ENCODE measurements at regions of chr21 and their contacts with region 1.

Region 1: GRCh38 chr21:44626262-44626661 is 631 bp upstream of the KRTAP10-9 start:
- DNase-seq: peak in 1 of 5 donors; percentile 58
- ATAC-seq: peak in 2 of 4 donors; percentile 20 to 26
- H3K4me3 ChIP-seq: no peak overlapping the region
- H3K27ac ChIP-seq: peak overlapping the region in 1 of 12 donors; percentile 52
- H3K4me1 ChIP-seq: peaks cover 0 to 29% (median 0%) of the 10 kb centered on the region in 12 donors
- H3K27me3 ChIP-seq: peaks cover 0 to 26% (median 0%) of the 10 kb centered on the region in 9 donors
- CTCF ChIP-seq: no peak
- POLR2A ChIP-seq: no peak

Region 2: DNA sequence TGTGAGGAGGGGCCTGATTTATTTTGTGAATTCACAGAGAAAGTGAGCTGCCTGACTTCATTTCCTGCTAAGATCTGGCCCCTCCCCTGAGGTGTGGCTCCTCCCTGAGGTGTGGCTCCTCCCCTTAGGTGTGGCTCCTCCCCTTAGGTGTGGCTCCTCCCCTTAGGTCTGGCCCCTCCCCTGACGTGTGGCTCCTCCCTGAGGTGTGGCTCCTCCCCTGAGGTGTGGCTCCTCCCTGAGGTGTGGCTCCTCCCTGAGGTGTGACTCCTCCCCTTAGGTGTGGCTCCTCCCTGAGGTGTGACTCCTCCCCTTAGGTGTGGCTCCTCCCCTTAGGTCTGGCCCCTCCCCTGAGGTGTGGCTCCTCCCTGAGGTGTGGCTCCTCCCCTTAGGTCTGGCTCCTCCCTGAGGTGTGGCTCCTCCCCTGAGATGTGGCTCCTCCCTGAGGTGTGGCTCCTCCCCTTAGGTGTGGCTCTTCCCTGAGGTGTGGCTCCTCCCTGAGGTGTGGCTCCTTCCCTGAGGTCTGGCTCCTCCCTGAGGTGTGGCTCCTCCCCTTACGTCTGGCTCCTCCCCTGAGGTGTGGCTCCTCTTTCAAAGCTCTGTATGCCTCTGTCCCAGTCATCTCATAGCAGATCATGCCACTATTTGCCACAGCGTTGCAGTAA is 197.8 kb before region 1 on chr21:
- intact Hi-C with region 1: no loop called
- DNase-seq: peak in 1 of 5 donors; percentile 20
- ATAC-seq: no peak
- H3K4me3 ChIP-seq: no peak overlapping the region
- H3K27ac ChIP-seq: no peak overlapping the region
- H3K4me1 ChIP-seq: no peaks in the 10 kb centered on the region
- H3K27me3 ChIP-seq: peaks cover 0 to 11% (median 0%) of the 10 kb centered on the region in 9 donors
- CTCF ChIP-seq: no peak
- POLR2A ChIP-seq: no peak

Region 3: DNA sequence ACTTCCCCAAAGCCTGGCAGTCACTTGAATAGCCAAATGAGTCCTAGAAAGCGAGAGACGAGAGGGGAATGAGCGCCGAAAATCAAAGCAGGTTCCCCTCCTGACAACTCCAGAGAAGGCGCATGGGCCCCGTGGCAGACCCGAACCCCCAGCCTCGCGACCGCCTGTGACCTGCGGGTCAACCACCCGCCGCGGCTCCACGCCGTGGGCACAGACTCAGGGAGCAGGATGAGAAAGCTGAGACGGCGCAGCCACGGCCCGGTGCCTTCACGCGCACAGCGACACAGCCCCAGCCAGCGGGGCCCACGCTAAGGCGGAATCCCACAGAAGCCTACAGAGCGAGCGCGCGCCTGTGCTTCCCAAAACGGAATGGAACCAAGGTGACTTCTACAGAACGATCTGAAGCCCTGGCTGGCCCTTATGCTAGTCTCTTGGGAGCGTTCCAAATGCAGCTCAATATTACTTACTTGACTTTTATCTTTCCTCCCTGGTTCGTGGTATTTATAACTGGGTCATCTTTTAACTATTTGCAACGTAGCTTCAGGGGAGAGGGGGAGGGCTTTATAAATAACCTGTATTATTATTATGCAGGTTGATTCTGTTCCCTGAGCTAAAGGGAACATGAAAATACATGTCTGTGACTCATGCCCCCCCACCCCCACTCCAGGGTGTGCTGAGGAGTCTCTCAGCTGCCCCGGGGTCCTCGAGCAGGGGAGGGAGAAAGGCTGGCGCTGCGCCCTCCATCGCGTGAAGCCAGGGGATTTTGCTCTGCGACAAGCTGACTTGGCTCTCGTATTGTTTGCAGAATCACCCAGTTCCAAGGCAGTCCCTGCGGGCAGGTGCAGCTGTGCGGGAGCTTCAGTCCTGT is 83.4 kb after region 1 on chr21:
- intact Hi-C with region 1: loop called in 1 of 10 experiments (anchors 10 kb)
- DNase-seq: peak in 1 of 5 donors; percentile 61
- ATAC-seq: peak; percentile 39 to 73 (median 64)
- H3K4me3 ChIP-seq: peak overlapping the region in 8 of 12 donors; percentile 5 to 35 (median 14)
- H3K27ac ChIP-seq: peak overlapping the region in 4 of 12 donors; percentile 46 to 72 (median 54)
- H3K4me1 ChIP-seq: peaks cover 0 to 46% (median 15%) of the 10 kb centered on the region in 12 donors
- H3K27me3 ChIP-seq: peaks cover 29 to 90% (median 76%) of the 10 kb centered on the region in 9 donors
- CTCF ChIP-seq: no peak
- POLR2A ChIP-seq: no peak

Region 4: GRCh38 chr21:44742418-44743153 is 116.3 kb after region 1 on chr21:
- intact Hi-C with region 1: loop called in 1 of 10 experiments (anchors 5 kb)
- DNase-seq: no peak
- ATAC-seq: no peak
- H3K4me3 ChIP-seq: no peak overlapping the region
- H3K27ac ChIP-seq: no peak overlapping the region
- H3K4me1 ChIP-seq: no peaks in the 10 kb centered on the region
- H3K27me3 ChIP-seq: peaks cover 0 to 3% (median 0%) of the 10 kb centered on the region in 9 donors
- CTCF ChIP-seq: peak in 9 of 12 donors; percentile 8 to 42 (median 32)
- POLR2A ChIP-seq: no peak

Region 5: DNA sequence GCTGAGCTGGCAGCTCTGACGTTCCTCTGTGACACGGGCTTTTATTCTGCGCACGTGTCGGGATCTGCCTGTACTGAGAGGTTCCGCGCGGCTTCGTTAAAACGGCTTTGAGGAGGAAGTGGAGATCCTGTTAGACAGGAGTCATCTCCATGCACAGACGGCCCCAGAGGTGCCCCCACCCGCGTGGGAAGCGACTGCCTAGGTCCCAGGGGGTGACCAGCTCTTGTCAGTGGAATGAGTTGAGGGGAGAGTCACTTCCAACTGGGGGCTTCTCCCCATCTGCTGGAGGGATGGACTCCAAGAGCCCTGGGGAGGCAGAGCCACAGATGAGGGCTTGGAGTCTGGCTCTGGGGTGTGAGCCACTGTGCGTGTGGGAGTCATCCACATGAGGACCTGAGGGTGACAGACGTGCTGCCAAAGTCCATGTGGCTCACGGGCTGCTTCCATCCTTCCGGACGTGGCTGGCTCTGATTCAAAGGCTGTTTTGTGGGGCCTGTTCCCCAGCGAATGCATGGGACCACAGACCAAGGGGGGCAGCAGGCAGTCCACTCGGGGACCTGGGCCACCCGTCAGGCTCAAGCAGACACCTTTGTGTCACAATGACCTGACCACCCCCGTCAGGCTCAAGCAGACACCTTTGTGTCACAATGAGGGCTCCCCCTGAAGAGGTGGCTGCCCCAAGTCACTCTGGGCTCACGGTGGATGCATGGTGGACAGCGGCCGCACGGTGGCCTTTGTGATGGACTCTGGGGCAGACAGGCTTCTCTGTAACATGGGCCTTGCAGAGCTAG is 220.4 kb after region 1 on chr21:
- intact Hi-C with region 1: no loop called
- DNase-seq: peak in 4 of 5 donors; percentile 51 to 65 (median 58)
- ATAC-seq: peak; percentile 22 to 58 (median 39)
- H3K4me3 ChIP-seq: peak overlapping the region in 8 of 12 donors; percentile 25 to 58 (median 49)
- H3K27ac ChIP-seq: peak overlapping the region in 11 of 12 donors; percentile 6 to 63 (median 45)
- H3K4me1 ChIP-seq: peaks cover 0 to 44% (median 22%) of the 10 kb centered on the region in 12 donors
- H3K27me3 ChIP-seq: no peaks in the 10 kb centered on the region
- CTCF ChIP-seq: no peak
- POLR2A ChIP-seq: no peak

Measured in heart left ventricle (tissue), 16 donors.